GM10248 (cell line): ENCODE measurements at regions of chr1 and their contacts with region 1.

Region 1: GRCh38 chr1:111725192-111725591 is 14.0 kb downstream of the INKA2 start:
- DNase-seq: no peak
- CTCF ChIP-seq: no peak

Region 2: GRCh38 chr1:111739194-111739924 is 14.2 kb after region 1 on chr1 and contains the start of gene INKA2:
- CTCF ChIA-PET with region 1: interaction called, 10 read pairs
- POLR2A ChIA-PET with region 1: interaction called, 3 read pairs
- DNase-seq: peak; percentile 94
- CTCF ChIP-seq: no peak